K562 (cell line): ENCODE measurements at regions of chr20 and their contacts with region 1.

Region 1: GRCh38 chr20:64119681-64120341 is 12.4 kb upstream of the NPBWR2 start:
- DNase-seq: no peak
- ATAC-seq: peak; percentile 51
- H3K4me3 ChIP-seq: no peak overlapping the region
- H3K27ac ChIP-seq: no peak overlapping the region
- H3K4me1 ChIP-seq: peaks cover 3 to 22% of the 10 kb centered on the region in 2 experiments; a peak in 2 of 5 replicates
- H3K27me3 ChIP-seq: peaks cover 0 to 27% of the 10 kb centered on the region in 2 experiments; a peak in 3 of 5 replicates
- CTCF ChIP-seq: no peak
- EP300 ChIP-seq: no peak
- POLR2A ChIP-seq: no peak
- RAD21 ChIP-seq: no peak

Region 2: DNA sequence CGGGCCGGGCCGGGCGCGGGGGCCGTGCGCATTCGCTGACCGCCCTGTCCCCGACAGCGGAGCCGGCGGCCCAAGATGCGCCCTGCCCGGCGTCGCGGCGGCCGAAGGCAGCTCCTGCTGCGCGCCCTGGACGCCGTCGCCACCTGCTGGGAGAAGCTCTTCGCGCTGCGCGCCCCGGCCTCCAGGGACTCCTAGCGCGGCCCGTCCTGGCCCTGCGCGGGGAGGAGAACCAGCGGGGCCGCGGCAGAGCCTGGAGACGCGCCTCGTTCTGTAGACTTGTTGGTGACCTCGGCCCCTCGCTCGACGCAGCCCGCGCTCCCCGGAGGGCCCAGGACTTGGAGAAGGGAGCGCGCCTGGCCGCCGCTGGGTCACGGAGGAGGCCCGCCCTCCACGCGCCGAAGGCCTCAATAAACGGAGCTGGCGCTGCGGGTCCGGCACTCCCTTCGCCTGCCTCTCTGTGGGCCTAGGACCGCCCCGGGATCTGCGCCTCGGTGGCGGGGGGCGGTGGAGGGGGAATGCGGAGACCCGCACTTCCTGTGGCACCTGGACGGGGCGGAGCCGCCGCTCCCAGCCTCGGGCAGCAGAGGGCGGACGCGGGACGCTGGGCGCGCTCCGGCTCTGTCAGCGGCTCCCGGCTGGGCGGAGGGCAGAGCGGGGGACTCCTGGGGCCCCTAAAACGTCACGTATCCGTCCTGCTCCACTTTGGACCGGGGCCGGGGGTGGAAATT is 81.1 kb before region 1 on chr20:
- CTCF ChIA-PET with region 1: interaction called, 16 read pairs
- POLR2A ChIA-PET with region 1: no interaction called
- in situ Hi-C with region 1: no loop called
- intact Hi-C with region 1: loop called (anchors 5 kb)
- DNase-seq: peak; percentile 84 to 89 (median 86)
- ATAC-seq: peak; percentile 86
- H3K4me3 ChIP-seq: peak overlapping the region; percentile 51
- H3K27ac ChIP-seq: peak overlapping the region; percentile 83
- H3K4me1 ChIP-seq: peaks cover 33 to 85% of the 10 kb centered on the region in 2 experiments
- H3K27me3 ChIP-seq: no peaks in the 10 kb centered on the region
- CTCF ChIP-seq: peak; percentile 63 to 97 (median 86)
- EP300 ChIP-seq: no peak
- POLR2A ChIP-seq: peak; percentile 37; the same call in 1 of the 2 replicates
- RAD21 ChIP-seq: peak; percentile 60 to 73

Region 3: GRCh38 chr20:64083378-64083803 is 36.4 kb before region 1 on chr20:
- CTCF ChIA-PET with region 1: interaction called, 14 read pairs
- POLR2A ChIA-PET with region 1: no interaction called
- in situ Hi-C with region 1: no loop called
- intact Hi-C with region 1: loop called (anchors 1 kb)
- DNase-seq: peak; percentile 84 to 90 (median 89)
- ATAC-seq: peak; percentile 85
- H3K4me3 ChIP-seq: peak overlapping the region; percentile 44
- H3K27ac ChIP-seq: no peak overlapping the region
- H3K4me1 ChIP-seq: peaks cover 9 to 65% of the 10 kb centered on the region in 2 experiments; a peak in 4 of 5 replicates
- H3K27me3 ChIP-seq: peaks cover 6 to 32% of the 10 kb centered on the region in 2 experiments; a peak in 4 of 5 replicates
- CTCF ChIP-seq: peak; percentile 64 to 90 (median 75)
- EP300 ChIP-seq: no peak
- POLR2A ChIP-seq: no peak
- RAD21 ChIP-seq: peak; percentile 64 to 76

Region 4: GRCh38 chr20:64261138-64261537 is 141.3 kb after region 1 on chr20:
- CTCF ChIA-PET with region 1: no interaction called
- POLR2A ChIA-PET with region 1: no interaction called
- in situ Hi-C with region 1: no loop called
- intact Hi-C with region 1: no loop called
- DNase-seq: no peak
- ATAC-seq: no peak
- H3K4me3 ChIP-seq: no peak overlapping the region
- H3K27ac ChIP-seq: no peak overlapping the region
- H3K4me1 ChIP-seq: peaks cover 7 to 16% of the 10 kb centered on the region in 2 experiments; a peak in 3 of 5 replicates
- H3K27me3 ChIP-seq: no peaks in the 10 kb centered on the region
- CTCF ChIP-seq: no peak
- EP300 ChIP-seq: no peak
- POLR2A ChIP-seq: no peak
- RAD21 ChIP-seq: no peak